PC-3 (cell line): ENCODE measurements at regions of chr3 and their contacts with region 1.

Region 1: GRCh38 chr3:184561061-184561912 is at the start of gene EPHB3:
- DNase-seq: peak; percentile 99
- ATAC-seq: peak; percentile 75
- H3K4me3 ChIP-seq: peak within 1 kb of the TSS; percentile 81
- H3K27ac ChIP-seq: peak within 1 kb of the TSS; percentile 75
- H3K4me1 ChIP-seq: peaks cover 62% of the 10 kb centered on the region
- H3K27me3 ChIP-seq: no peaks in the 10 kb centered on the region
- CTCF ChIP-seq: peak; percentile 100
- total RNA-seq, gene EPHB3: 18.2 and 23.1 TPM in 2 replicates

Region 2: DNA sequence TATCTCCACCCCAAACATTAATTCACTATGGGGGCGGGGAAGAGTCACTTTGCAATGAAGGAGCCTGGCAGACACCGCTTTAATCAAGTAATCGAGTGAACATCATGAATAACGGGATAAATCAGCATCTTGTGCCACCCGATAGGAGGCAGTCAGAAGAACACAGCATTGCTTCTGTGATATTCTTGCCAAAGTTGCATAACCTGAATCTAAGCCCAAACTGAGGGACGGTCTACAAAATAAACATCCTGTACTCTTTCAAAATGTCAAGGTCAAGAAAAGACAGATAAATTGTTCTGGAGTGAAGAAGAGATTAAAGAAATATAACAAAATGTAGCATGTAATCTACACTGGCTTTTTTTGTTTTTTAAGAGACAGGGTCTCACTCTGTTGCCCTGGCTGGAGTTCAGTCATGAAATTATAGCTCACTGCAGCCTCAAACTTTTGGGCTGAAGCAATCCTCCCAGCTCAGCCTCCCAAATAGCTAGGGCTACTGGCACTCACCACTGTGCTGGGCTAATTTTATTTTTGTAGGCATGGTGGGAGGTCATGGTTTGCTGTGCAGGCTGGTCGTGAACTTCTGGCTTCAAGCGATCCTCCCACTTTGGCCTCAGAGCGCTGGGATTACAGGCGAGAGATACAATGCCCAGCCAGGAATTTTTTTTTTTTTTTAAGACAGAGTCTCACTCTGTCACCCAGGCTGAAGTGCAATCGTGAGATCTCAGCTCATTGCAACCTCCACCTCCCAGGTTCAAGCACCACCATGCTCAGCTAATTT is 352.0 kb before region 1 on chr3:
- CTCF ChIA-PET with region 1: interaction called, 12 read pairs
- POLR2A ChIA-PET with region 1: no interaction called
- intact Hi-C with region 1: no loop called
- DNase-seq: no peak
- ATAC-seq: no peak
- H3K4me3 ChIP-seq: no peak overlapping the region
- H3K27ac ChIP-seq: no peak overlapping the region
- H3K4me1 ChIP-seq: no peaks in the 10 kb centered on the region
- H3K27me3 ChIP-seq: peaks cover 22% of the 10 kb centered on the region
- CTCF ChIP-seq: no peak

Region 3: DNA sequence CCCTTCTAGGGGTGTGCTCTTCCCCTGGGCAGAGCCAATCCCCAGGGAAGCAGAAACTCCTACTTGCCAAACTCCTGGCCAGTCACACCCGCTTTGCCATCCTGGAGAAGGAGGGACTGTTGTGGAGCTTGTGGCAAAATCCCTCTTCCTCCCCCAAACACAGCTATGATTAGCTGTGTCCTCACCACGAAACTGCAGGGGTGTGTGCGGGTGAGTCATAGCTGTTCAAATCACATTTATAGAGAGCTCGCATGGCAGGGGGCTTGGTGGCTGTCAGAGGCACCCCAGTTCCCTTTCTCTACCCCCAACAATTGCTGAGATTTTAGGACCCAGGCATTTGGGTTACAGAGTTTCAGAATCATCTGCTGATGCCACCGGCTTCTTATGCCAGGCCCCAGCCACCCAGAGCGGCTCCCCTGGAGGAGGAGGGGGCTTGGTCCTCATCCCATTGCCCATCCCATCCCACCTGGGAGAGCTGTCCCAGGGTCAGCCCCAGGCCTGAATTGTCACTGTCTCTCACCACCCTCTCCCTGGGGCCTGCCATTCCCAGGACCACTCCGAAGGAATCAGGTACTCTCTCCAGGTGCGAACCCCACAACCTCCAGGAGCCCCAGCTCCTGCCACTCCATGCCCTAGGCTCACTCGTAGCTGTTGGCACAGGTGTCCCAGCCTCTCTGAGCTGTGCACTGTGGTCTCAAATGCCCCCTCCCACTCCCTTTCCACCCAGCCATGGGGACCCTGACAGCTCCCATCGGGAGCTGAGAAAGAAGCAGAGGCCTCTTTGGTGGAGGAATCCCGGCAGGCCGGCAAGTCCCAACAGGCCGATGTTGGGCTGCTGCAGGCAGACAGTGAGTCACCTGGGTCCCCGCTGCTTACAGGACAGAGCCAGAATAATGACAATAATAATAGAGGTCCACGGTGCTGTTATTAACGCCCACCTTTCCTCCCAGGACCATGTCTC is 179.5 kb after region 1 on chr3:
- CTCF ChIA-PET with region 1: interaction called, 11 read pairs
- POLR2A ChIA-PET with region 1: interaction called, 5 read pairs
- intact Hi-C with region 1: no loop called
- DNase-seq: peak; percentile 80
- ATAC-seq: peak; percentile 68
- H3K4me3 ChIP-seq: no peak overlapping the region
- H3K27ac ChIP-seq: no peak overlapping the region
- H3K4me1 ChIP-seq: peaks cover 39% of the 10 kb centered on the region
- H3K27me3 ChIP-seq: no peaks in the 10 kb centered on the region
- CTCF ChIP-seq: no peak

Region 4: DNA sequence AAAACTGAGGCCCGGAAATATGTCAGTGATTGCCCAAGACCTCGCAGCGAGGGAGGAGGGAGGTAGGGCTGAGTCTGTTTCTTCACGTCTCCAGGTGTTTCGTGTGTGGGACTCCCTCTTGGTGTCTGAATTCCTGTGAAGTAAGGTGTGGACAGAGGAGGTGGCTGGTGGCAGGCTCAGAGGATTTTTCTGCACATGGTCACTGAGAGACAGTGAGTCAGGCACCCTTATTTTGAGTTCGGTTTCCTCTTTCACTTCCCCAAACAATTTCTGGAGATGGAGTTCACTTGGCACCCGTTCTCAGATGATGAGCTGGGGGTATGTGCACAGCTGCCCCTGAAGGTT is 204.4 kb after region 1 on chr3:
- CTCF ChIA-PET with region 1: interaction called, 29 read pairs
- POLR2A ChIA-PET with region 1: interaction called, 4 read pairs
- intact Hi-C with region 1: no loop called
- DNase-seq: peak; percentile 60
- ATAC-seq: peak; percentile 59
- H3K4me3 ChIP-seq: peak overlapping the region; percentile 32; the same call in 1 of the 2 replicates
- H3K27ac ChIP-seq: peak overlapping the region; percentile 73
- H3K4me1 ChIP-seq: peaks cover 16% of the 10 kb centered on the region
- H3K27me3 ChIP-seq: no peaks in the 10 kb centered on the region
- CTCF ChIP-seq: no peak

Region 5: GRCh38 chr3:184808021-184808420 is 246.7 kb after region 1 on chr3:
- CTCF ChIA-PET with region 1: no interaction called
- POLR2A ChIA-PET with region 1: no interaction called
- intact Hi-C with region 1: loop called (anchors 1 kb)
- DNase-seq: no peak
- ATAC-seq: no peak
- H3K4me3 ChIP-seq: no peak overlapping the region
- H3K27ac ChIP-seq: no peak overlapping the region
- H3K4me1 ChIP-seq: peaks cover 9% of the 10 kb centered on the region
- H3K27me3 ChIP-seq: no peaks in the 10 kb centered on the region
- CTCF ChIP-seq: peak; percentile 37; the same call in 1 of the 2 replicates